ENCODE measurements at regions of chr4 and their contacts with region 1.

Region 1: GRCh38 chr4:176195184-176195978 is at the start of gene SPATA4:
- DNase-seq: peak; percentile 92 to 93
- ATAC-seq: peak; percentile 89 to 92
- H3K4me3 ChIP-seq: peak within 1 kb of the TSS; percentile 68 to 74 (median 69)
- H3K27ac ChIP-seq: peak within 1 kb of the TSS; percentile 82 to 93 (median 90)
- H3K4me1 ChIP-seq: peaks cover 21 to 27% of the 10 kb centered on the region in 2 donors
- H3K27me3 ChIP-seq: no peaks in the 10 kb centered on the region
- CTCF ChIP-seq: no peak
- POLR2A ChIP-seq: peak; percentile 71 to 72
- total RNA-seq, gene SPATA4: 0.22 to 0.29 TPM in 2 of 4 donors, not detected in the others

Region 2: GRCh38 chr4:176210101-176210500 is 14.7 kb after region 1 on chr4:
- in situ Hi-C with region 1: no loop called
- intact Hi-C with region 1: loop called (anchors 2 kb)
- DNase-seq: no peak
- ATAC-seq: peak; percentile 23 to 29
- H3K4me3 ChIP-seq: no peak overlapping the region
- H3K27ac ChIP-seq: peak overlapping the region in 3 of 4 donors; percentile 11 to 55 (median 28)
- H3K4me1 ChIP-seq: no peaks in the 10 kb centered on the region
- H3K27me3 ChIP-seq: no peaks in the 10 kb centered on the region
- CTCF ChIP-seq: no peak
- POLR2A ChIP-seq: no peak

Region 3: DNA sequence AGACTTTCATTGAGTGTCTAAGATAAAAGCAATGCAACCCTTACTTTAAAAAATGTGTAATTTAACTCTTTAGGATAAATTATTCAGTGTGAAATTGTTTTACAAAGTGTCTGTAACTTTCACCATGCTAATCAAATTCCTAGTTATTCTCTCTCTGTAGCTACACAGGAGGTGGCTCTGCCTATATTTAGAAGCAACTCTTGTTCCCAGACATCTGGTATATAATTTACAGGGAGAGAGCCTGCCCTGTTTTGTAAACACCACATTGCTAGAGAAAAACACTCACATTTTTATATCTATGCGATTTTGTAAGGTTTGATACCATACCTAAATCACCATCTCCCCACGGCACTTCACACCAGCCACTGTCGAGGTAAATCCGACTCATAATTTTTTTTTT is 35.5 kb after region 1 on chr4:
- in situ Hi-C with region 1: no loop called
- intact Hi-C with region 1: loop called (anchors 2 kb)
- DNase-seq: no peak
- ATAC-seq: peak; percentile 76 to 78
- H3K4me3 ChIP-seq: peak overlapping the region; percentile 17 to 37 (median 32)
- H3K27ac ChIP-seq: peak overlapping the region; percentile 82 to 91 (median 86)
- H3K4me1 ChIP-seq: peaks cover 33 to 79% of the 10 kb centered on the region in 2 donors
- H3K27me3 ChIP-seq: no peaks in the 10 kb centered on the region
- CTCF ChIP-seq: no peak
- POLR2A ChIP-seq: peak; percentile 7 to 29